Lower leg skin (tissue), 4 donors: ENCODE measurements at regions of chr19 and their contacts with region 1.

Region 1: DNA sequence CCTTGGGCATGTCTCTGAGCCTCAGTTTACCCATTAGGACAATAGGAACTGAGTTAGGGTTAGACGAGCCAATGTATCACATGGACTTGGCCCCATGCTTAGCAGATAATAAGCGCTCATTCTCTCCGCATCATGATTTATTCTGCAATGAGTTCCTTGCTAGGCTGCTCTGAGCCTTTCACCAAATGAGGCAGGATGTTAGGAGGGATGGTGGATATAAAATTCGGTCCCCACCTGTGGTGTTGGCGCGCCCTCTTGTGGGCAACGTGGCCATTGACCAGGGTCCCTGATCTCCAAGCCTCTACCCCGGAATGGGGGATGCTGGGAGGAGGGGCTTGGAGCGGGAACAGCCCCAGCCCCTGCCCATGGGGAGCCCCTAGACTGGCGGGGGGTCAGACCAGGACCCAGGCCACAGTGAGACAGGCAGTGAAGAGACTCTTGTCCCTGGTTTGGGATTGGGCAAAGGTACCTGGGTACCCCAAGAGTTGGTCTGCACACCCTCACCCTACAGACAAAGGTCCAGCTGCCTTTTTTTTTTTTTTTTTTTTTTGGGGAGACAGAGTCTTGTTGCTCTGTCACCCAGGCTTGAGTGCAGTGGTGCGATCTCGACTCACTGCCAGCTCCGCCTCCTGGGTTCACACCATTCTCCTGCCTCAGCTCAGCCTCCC is 43.9 kb downstream of the CERS4 start:
- DNase-seq: peak; percentile 78 to 95
- H3K4me3 ChIP-seq: no peak overlapping the region
- CTCF ChIP-seq: peak in 1 of 3 donors; percentile 80
- POLR2A ChIP-seq: no peak

Region 2: GRCh38 chr19:7970716-7971448 is 282.2 kb before region 1 on chr19:
- intact Hi-C with region 1: loop called (anchors 10 kb)
- DNase-seq: no peak
- H3K4me3 ChIP-seq: no peak overlapping the region
- CTCF ChIP-seq: peak in 1 of 3 donors; percentile 29
- POLR2A ChIP-seq: no peak

Region 3: GRCh38 chr19:8158411-8159074 is 94.5 kb before region 1 on chr19:
- intact Hi-C with region 1: loop called (anchors 2 kb)
- DNase-seq: peak in 1 of 2 donors; percentile 38
- H3K4me3 ChIP-seq: no peak overlapping the region
- CTCF ChIP-seq: peak in 1 of 3 donors; percentile 63
- POLR2A ChIP-seq: no peak